Activated T-helper 1 cell treated with anti-CD3 and anti-CD28 coated beads, Interleukin-12 subunit alpha, Interleukin-12 subunit beta, Interleukin-2, Interleukin-4 antibody, amounts not matched to agents 30 ng/mL and 10 ng/mL and 1 ng/mL, durations not matched to agents 14 hours and 24 hours and 36 hours (primary cell): ENCODE measurements at regions of chr17 and their contacts with region 1.

Region 1: DNA sequence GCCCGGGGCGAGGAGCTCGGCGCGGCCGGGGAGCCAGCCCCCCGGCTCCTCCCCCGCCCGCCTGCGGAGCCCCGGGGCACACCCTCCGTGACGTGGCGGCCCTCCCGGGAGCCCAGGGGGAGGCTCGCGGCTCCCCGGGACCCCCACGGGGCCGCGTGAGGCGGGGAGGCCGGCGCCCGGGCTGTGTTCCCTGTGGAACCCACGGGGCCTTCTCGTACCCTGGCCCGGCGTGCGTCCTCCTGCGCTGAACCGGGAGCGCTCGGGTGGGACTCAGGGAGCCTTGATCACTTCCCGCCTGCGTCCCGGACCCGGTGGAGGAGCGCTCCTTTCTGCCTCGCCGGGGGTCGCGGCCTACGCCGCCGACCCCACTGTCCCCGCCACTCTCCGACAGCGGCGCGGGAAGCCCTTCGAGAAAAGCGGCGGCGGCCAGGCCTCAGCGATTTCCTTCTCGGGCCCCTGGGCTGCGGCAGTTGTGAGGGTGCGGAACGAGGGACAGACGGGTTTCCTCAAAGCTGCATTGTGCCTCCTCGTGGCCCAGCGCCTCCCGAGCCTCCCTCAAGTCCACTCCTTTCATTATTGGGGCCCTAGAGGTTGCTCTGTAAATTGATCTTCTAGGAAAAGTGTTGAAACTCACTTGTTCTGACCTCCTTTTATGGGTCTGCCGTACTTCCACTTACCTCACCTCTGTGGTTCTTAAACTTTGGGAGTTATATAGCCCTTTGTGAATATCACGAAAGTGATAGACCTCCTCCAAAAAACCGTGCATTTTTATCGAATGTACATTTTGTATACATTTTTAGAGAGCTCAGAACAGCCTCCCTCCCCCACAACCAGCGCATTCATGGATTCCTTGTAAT is 597 bp downstream of the LIG3 start:
- DNase-seq: peak; percentile 78
- H3K4me3 Mint-ChIP-seq: peak overlapping the region; percentile 91
- H3K27ac Mint-ChIP-seq: peak overlapping the region; percentile 96
- H3K4me1 Mint-ChIP-seq: peaks cover 52% of the 10 kb centered on the region
- H3K27me3 Mint-ChIP-seq: no peaks in the 10 kb centered on the region

Region 2: DNA sequence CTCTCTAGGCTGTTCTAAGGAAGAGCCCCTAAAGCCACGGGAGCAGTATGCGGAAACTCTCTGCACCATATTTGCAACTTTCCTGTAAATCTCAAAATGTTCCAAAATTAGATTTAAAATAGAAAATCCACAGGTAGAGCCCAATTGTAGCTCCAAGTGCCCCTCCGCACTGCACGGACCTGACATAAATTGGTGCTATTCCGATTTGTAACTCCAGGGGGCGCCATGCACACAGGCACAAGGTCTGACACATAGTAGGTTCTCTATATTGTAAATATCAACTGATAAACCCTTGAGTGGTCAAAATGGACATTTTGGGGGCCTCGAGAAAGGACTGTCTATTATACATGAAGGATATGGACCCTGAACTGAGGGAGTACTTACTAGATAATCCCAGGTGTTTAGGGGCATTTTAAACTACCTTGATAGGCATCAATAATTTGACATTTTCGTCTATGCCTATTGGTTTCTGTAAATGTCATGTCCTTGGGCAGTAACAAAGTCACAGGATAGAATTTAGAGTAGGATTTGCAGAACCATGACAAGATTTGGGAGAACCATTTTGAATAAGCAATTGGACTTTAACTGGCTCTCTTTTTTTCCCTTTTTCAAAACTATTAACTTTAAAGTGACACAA is 438.1 kb before region 1 on chr17:
- intact Hi-C with region 1: loop called (anchors 5 kb)
- DNase-seq: peak; percentile 17
- H3K4me3 Mint-ChIP-seq: no peak overlapping the region
- H3K27ac Mint-ChIP-seq: no peak overlapping the region
- H3K4me1 Mint-ChIP-seq: no peaks in the 10 kb centered on the region
- H3K27me3 Mint-ChIP-seq: peaks cover 21% of the 10 kb centered on the region

Region 3: GRCh38 chr17:34998205-34998604 is 17.3 kb after region 1 on chr17:
- intact Hi-C with region 1: loop called (anchors 1 kb)
- DNase-seq: peak; percentile 77
- H3K4me3 Mint-ChIP-seq: no peak overlapping the region
- H3K27ac Mint-ChIP-seq: peak overlapping the region; percentile 11
- H3K4me1 Mint-ChIP-seq: peaks cover 21% of the 10 kb centered on the region
- H3K27me3 Mint-ChIP-seq: no peaks in the 10 kb centered on the region

Region 4: GRCh38 chr17:35046740-35047283 is 65.9 kb after region 1 on chr17:
- intact Hi-C with region 1: loop called (anchors 1 kb)
- DNase-seq: peak; percentile 65
- H3K4me3 Mint-ChIP-seq: peak overlapping the region; percentile 66
- H3K27ac Mint-ChIP-seq: peak overlapping the region; percentile 97
- H3K4me1 Mint-ChIP-seq: peaks cover 49% of the 10 kb centered on the region
- H3K27me3 Mint-ChIP-seq: no peaks in the 10 kb centered on the region

Region 5: DNA sequence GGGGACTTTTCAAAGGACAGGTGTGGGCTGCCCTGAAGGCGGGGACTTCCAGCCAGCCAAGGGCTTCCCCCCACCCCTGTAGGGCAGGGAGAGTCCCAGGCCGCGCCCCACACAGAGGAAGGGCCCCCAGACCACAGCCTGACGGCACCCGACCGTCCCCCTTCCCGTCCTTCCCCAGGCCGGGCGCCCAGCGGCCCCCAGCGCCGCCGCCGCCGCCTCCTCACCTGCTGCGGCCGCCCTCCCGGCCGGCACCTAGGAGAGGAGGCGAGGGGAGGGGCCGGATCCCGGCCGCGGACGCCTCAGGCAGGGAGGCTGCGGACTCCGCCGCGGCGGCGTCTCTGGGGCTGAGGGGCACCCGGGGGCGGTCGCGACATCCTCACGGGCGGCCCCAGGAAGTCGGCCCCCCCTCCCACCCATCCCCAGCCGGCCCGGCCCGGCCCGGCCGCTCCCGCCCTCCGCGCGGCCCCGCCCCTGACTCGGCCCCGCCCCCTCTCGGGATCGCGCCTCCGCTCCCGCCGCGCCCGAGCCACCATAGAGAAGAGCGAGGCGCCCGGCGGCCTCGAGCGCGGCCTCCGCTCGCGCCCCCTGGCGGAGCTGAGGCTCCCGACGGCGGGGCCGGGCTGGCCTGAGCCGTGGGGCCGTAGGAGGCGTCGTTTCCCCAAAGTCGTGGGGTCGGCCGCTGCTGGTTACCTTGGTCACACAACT is 108.1 kb after region 1 on chr17:
- intact Hi-C with region 1: loop called (anchors 1 kb)
- DNase-seq: peak; percentile 87
- H3K4me3 Mint-ChIP-seq: peak overlapping the region; percentile 93
- H3K27ac Mint-ChIP-seq: peak overlapping the region; percentile 95
- H3K4me1 Mint-ChIP-seq: peaks cover 50% of the 10 kb centered on the region
- H3K27me3 Mint-ChIP-seq: no peaks in the 10 kb centered on the region

Region 6: DNA sequence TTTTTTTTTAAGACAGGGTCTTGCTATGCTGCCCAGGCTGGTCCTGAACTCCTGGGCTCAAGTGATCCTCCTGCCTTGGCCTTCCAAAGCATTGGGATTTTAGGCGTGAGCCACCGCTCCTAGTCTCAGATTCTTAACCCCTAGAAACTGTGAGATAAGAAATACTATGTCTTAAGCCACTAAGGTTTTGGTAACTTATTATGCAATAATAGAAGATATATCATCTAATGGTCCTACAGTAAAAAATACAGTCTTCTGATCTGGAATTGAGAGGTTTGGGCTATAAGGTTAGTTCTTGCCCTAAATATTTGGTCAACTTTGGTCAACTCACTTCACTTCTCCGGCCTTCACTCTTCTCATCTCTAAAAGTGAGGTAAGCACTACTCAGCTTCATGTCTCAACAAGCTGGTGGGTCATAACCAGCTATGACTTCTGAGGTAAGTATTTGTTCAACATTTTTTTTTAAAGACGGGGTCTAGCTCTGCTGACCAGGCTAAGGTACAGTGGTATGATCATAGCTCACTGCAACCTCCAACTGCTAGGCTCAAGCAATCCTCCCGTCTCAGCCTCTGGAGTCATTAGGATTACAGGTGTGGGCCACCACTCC is 124.0 kb after region 1 on chr17:
- intact Hi-C with region 1: no loop called
- DNase-seq: no peak
- H3K4me3 Mint-ChIP-seq: no peak overlapping the region
- H3K27ac Mint-ChIP-seq: no peak overlapping the region
- H3K4me1 Mint-ChIP-seq: no peaks in the 10 kb centered on the region
- H3K27me3 Mint-ChIP-seq: no peaks in the 10 kb centered on the region

Region 7: GRCh38 chr17:35214631-35215273 is 233.8 kb after region 1 on chr17:
- intact Hi-C with region 1: loop called (anchors 10 kb)
- DNase-seq: peak; percentile 12
- H3K4me3 Mint-ChIP-seq: peak overlapping the region; percentile 40
- H3K27ac Mint-ChIP-seq: peak overlapping the region; percentile 92
- H3K4me1 Mint-ChIP-seq: peaks cover 85% of the 10 kb centered on the region
- H3K27me3 Mint-ChIP-seq: no peaks in the 10 kb centered on the region

Region 8: DNA sequence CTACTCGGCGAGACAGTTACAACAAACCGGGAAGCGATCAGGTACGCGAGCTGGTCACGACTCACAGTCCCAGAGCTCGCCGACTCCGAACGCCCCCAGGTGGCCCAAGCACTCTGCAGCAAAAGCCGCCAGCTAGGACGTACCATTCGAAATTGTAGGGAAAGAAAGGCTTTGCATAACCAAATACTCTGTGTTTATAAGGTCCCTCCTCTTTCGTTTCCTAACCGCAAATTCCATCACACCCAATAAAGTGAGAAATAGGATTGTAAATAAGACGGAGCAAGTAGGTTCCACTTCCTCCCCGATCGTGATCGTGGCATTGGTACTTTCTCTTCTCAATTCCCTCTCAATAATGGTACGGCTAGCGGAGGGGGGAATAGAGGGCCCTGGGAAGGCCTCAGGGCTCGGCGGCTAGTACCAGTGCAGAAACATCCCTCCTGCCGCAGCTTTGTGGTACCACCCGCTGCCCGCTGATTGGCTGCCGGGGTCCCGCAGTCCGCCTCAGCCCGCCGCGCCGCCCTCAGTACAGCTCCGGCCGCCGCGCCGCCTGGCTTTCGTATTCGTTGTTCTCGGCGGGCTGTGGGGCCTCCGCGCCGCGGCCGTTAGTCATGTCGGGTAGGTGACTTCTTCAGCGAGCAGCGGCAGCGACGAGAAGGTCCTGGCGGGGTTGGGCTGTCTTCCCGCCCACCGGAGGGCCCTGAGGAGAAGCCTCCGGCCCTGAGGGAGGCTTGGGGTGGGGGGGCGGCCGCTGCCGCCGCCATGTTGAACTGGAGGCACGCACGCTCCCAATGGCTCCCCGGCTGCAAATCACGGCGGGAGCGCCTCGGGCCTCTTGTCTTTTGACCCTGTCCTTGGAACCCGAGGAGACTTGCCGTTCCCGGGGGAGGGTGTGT is 828.3 kb after region 1 on chr17 and contains the start of gene TAF15:
- intact Hi-C with region 1: loop called (anchors 10 kb)
- DNase-seq: peak; percentile 95
- H3K4me3 Mint-ChIP-seq: peak within 1 kb of the TSS; percentile 98
- H3K27ac Mint-ChIP-seq: peak within 1 kb of the TSS; percentile 99
- H3K4me1 Mint-ChIP-seq: peaks cover 67% of the 10 kb centered on the region
- H3K27me3 Mint-ChIP-seq: no peaks in the 10 kb centered on the region
- total RNA-seq, gene TAF15: 311 and 322 TPM in 2 replicates